Activated naive CD4-positive, alpha-beta T cell treated with anti-CD3 and anti-CD28 coated beads, Interleukin-2, amount 10 ng/mL, durations not matched to agents 7 days and 5 days (primary cell): ENCODE measurements at regions of chr15 and their contacts with region 1.

Region 1: DNA sequence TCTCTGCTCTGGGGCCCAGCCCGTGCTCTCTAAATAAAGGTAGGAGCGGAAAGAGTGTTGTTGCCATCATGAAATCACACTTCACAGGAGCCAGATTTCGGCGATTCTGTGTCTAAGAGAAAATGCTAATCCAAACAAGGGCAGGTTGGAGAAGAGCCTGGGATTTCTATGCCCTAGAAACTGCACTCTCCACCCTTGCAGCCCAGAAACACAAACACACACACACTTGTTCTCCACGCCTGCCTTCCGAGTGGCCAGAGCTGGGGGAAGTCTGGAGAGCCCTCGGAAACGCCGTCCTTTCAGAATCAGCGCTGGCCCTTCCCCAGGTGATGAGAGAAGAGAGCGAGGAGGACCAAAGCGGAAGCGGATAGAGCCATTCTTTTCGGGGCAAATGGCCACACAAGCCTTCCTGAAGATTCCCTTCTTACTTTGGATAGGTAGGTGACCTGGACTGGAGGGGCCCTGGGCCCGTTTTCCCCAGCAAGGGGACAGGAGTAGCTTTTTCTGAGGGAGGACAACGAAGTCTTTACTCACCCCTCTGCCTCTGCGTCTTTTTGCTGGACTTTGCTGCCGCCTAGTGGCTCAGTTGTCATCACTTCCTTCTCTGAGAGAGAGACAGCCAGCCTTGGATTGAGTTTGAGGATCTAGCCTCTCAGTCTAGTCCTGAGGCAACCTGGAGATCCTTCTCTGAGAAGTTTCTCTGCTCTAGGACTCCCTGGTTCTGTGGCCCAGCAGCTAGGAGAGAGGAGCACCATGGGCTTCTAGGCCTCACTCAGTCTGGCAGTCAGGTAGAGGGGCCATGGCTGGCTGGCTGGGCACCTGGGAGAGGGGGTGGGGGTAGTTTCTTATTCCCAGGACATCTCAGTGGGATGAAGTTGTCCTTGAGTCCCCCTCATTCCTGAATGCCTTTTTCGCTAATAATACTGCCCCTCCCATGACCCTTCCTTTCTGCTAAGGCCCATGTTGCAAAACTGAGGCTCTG is 37.7 kb downstream of the SENP8 start:
- DNase-seq: peak; percentile 89
- H3K4me3 Mint-ChIP-seq: peak overlapping the region; percentile 65
- H3K27ac Mint-ChIP-seq: no peak overlapping the region
- H3K4me1 Mint-ChIP-seq: peaks cover 9% of the 10 kb centered on the region
- H3K27me3 Mint-ChIP-seq: peaks cover 12% of the 10 kb centered on the region

Region 2: GRCh38 chr15:71743861-71744382 is 412.0 kb before region 1 on chr15:
- CTCF ChIA-PET with region 1: interaction called, 46 read pairs
- DNase-seq: peak; percentile 71
- H3K4me3 Mint-ChIP-seq: no peak overlapping the region
- H3K27ac Mint-ChIP-seq: no peak overlapping the region
- H3K4me1 Mint-ChIP-seq: no peaks in the 10 kb centered on the region
- H3K27me3 Mint-ChIP-seq: peaks cover 13% of the 10 kb centered on the region

Region 3: DNA sequence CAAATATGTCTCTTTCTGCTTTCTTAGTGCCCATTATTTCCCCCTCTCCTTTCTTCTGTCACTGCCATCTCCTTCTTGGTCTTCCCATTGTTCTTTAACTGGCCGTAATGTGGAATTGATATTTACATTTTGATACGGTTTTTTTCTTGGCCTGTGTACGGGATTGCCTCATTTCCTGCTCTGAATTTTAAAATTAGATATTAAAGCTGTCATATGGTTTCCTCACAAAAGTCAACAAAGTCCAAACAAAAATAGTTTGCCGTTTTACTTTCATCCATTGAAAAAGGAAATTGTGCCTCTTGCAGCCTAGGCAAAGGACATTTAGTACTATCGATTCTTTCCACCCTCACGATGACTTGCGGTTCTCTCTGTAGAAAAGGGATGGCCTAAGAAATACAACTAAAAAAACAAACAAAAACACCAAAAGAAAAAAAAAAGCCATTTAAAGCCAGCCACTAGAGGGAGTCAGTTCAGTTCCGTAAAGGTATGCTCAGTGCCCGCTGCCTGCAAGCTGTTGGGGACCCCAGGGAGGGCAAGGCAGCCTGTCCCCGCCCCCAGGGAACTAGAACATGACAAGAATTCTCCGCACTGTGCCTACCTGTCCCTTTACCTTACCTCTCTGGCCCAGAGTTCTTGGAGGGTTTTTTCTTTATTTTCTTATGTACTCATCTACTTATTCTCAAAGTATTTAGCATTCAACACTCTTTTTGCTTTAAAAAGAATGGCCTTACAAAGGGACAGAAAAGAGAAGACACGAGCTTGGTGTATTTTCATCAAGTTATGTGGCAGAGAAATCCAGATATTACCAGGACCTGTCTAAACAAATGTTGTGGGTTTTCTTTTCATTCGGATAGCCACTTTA is 375.6 kb before region 1 on chr15:
- CTCF ChIA-PET with region 1: interaction called, 10 read pairs
- DNase-seq: peak; percentile 37
- H3K4me3 Mint-ChIP-seq: no peak overlapping the region
- H3K27ac Mint-ChIP-seq: no peak overlapping the region
- H3K4me1 Mint-ChIP-seq: no peaks in the 10 kb centered on the region
- H3K27me3 Mint-ChIP-seq: peaks cover 25% of the 10 kb centered on the region

Region 4: GRCh38 chr15:71800835-71801745 is 354.8 kb before region 1 on chr15:
- CTCF ChIA-PET with region 1: interaction called, 17 read pairs
- DNase-seq: peak; percentile 41
- H3K4me3 Mint-ChIP-seq: no peak overlapping the region
- H3K27ac Mint-ChIP-seq: no peak overlapping the region
- H3K4me1 Mint-ChIP-seq: no peaks in the 10 kb centered on the region
- H3K27me3 Mint-ChIP-seq: peaks cover 13% of the 10 kb centered on the region

Region 5: GRCh38 chr15:72249142-72249810 is 93.3 kb after region 1 on chr15:
- CTCF ChIA-PET with region 1: no interaction called
- DNase-seq: no peak
- H3K4me3 Mint-ChIP-seq: no peak overlapping the region
- H3K27ac Mint-ChIP-seq: no peak overlapping the region
- H3K4me1 Mint-ChIP-seq: no peaks in the 10 kb centered on the region
- H3K27me3 Mint-ChIP-seq: no peaks in the 10 kb centered on the region

Region 6: DNA sequence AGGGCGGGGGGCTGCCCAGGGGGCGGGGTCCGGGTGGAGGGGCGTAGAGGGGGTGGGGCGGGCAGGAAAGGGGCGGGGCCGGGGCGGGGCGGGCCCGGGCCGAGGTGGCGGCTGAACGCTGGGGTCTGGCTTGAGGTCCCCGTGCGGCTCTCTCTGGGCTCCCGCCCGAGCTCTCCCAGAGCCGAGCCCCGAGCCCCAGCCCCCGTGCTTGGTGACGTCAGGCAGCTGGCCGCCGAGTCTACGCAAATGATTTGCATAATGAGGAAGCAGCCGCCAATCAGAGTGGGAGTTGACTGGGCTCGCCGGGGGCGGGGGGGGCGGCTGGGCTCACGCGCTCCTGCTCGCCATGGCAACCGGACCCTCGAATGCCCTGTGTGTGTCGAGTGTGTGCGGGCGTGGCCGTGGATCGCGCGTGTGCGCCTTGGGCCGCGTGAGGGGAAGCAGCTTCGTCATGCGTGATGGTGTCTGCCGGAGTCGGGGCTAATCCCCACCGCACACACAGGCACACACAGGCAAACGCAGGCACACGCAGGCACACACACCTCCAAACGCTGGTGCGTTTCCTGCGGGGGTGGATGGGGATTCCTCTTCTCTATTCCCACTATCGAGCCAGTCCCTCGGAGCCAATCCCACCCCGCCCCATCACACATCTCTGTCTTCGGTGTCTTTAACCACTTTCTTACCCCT is 164.2 kb after region 1 on chr15 and contains the start of gene CELF6:
- CTCF ChIA-PET with region 1: no interaction called
- DNase-seq: peak; percentile 86
- H3K4me3 Mint-ChIP-seq: peak within 1 kb of the TSS; percentile 78
- H3K27ac Mint-ChIP-seq: no peak within 1 kb of the TSS
- H3K4me1 Mint-ChIP-seq: peaks cover 20% of the 10 kb centered on the region
- H3K27me3 Mint-ChIP-seq: peaks cover 42% of the 10 kb centered on the region